ENCODE measurements at regions of chr1 and their contacts with region 1.

Region 1: DNA sequence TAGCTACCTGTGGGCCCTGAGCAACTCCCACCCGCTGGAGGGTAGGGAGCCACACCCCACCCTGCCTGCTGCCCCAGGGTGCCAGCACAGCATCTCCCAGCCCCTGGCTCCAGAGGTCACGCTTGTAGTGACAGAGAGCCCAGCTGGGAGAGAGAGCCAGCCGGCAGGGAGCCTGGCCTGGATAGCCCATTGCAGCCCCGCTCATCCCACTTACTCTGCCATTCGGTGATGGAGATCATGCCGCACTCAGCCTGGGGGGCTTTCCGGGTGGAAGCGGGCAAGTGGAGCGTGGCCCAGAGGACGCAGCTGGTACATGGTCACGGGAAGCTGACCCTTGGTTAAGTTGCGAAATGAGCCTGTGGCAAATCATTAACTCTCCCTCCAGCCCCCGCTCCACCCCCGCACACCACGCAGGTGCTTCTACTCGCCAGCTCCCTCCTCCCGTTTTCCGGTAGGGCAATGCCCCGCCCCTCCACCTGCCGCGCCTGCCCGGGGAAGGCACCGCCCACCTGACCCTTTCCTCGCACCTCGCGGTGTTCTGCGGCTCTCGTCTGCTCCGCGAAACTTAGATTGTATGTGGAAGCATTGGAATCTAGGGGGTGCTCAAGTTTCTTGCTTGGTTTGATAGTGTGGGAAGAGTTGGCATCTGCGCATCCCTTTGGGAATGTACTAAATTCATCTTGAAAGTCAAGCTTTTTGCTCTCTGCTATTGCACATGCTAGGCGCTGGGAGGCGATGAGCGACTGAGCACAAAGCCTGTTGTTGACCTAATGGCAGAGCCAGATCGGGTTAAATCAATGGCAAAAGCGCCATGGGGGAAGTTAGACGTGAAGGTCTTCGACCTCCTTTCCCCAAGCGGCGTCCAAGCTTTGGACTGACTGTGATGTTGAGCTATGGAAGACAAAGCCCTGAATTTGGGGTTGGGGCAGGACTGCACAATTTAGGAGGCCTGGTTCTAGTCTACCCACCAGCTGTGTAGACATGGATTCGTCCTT is at the start of gene GOLT1A:
- DNase-seq: peak; percentile 78 to 91
- ATAC-seq: peak; percentile 88 to 92
- H3K4me3 ChIP-seq: peak within 1 kb of the TSS; percentile 54
- H3K27ac ChIP-seq: peak within 1 kb of the TSS; percentile 73 to 88
- H3K4me1 ChIP-seq: peaks cover 6% of the 10 kb centered on the region; the same call in 2 of the 3 replicates
- CTCF ChIP-seq: peak; percentile 84
- EP300 ChIP-seq: no peak
- POLR2A ChIP-seq: no peak
- RAD21 ChIP-seq: peak; percentile 85 to 86
- polyA plus RNA-seq, gene GOLT1A: 6.4 and 6.8 TPM in 2 replicates

Region 2: GRCh38 chr1:204051258-204051657 is 162.7 kb before region 1 on chr1:
- CTCF ChIA-PET with region 1: no interaction called
- POLR2A ChIA-PET with region 1: no interaction called
- DNase-seq: no peak
- ATAC-seq: no peak
- H3K4me3 ChIP-seq: no peak overlapping the region
- H3K27ac ChIP-seq: no peak overlapping the region
- H3K4me1 ChIP-seq: no peaks in the 10 kb centered on the region
- CTCF ChIP-seq: no peak
- EP300 ChIP-seq: no peak
- POLR2A ChIP-seq: no peak
- RAD21 ChIP-seq: no peak

Region 3: GRCh38 chr1:204080163-204080903 is 133.6 kb before region 1 on chr1:
- CTCF ChIA-PET with region 1: no interaction called
- POLR2A ChIA-PET with region 1: no interaction called
- DNase-seq: peak; percentile 85 to 95
- ATAC-seq: peak; percentile 90 to 91
- H3K4me3 ChIP-seq: no peak overlapping the region
- H3K27ac ChIP-seq: peak overlapping the region; percentile 71 to 86
- H3K4me1 ChIP-seq: peaks cover 55% of the 10 kb centered on the region
- CTCF ChIP-seq: no peak
- EP300 ChIP-seq: no peak
- POLR2A ChIP-seq: no peak
- RAD21 ChIP-seq: no peak

Region 4: DNA sequence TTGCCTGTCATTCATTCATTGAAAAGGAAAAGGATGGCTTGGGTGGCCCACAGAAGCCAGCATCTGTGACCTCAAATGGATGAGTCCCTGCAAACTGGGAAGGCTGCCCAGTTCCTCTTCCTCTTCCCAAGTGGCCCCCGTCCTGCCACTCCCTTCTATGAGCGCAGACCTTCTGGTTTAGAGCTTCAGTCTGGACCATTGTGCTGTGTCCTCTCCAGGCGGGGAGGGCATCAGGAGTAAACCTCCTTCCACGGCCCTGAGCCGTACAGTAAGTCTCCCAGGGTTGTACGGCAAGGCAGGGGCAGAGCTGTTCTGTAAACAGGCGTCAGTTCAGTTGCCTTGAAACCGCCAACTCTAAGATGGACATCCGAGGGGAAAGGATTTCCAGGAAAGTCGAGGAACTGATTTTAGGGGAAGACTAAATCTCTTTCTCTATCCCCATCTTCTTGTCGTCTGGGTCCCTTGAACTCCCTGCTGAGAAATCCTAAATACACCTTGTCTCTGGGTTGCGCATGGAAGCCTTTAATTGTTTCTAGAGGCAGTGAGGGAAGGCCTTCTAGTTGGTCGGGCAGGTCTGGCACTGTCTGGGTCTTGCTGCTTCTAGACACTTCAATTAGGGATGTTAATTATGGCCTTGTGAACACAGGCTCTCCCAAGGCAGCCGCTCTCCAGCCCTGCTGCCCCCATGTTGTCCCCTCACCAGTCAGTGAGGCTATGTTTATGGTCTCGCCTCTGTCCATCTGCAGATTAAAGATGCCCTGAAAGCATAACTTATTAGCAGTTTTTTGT is 118.9 kb before region 1 on chr1:
- CTCF ChIA-PET with region 1: no interaction called
- POLR2A ChIA-PET with region 1: no interaction called
- DNase-seq: no peak
- ATAC-seq: peak in 1 of 2 experiments; percentile 33; a peak in 1 of 6 replicates
- H3K4me3 ChIP-seq: no peak overlapping the region
- H3K27ac ChIP-seq: 0 out of 6 replicates have a peak overlapping the region, but pooled peaks of 1 of the 2 experiments have one; percentile 80
- H3K4me1 ChIP-seq: peaks cover 27% of the 10 kb centered on the region
- CTCF ChIP-seq: no peak
- EP300 ChIP-seq: no peak
- POLR2A ChIP-seq: no peak
- RAD21 ChIP-seq: no peak

Region 5: DNA sequence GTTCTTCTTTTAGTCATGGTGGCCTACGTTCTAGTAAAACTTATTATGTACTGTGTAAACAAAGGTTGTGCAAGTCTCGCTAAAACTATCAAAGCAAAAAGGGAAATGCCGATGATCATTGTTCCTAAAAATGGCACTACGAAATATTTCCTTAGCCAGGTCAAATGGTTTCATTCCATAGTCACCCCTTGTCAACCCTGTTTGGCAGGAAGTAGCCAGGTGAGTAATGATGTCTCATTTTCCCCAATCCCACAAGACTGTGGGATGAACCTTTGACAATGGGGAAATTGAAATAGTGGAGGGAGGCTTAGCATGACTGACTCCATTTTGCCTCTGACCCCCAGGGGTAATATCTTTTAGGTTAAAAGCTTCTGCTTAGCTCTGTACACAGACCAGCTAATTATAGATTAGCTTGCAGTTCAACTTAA is 42.2 kb before region 1 on chr1:
- CTCF ChIA-PET with region 1: interaction called, 26 read pairs
- POLR2A ChIA-PET with region 1: no interaction called
- DNase-seq: peak; percentile 31 to 49
- ATAC-seq: peak in 1 of 2 experiments; percentile 49; a peak in 3 of 6 replicates
- H3K4me3 ChIP-seq: no peak overlapping the region
- H3K27ac ChIP-seq: no peak overlapping the region; a peak in 1 of 6 replicates
- H3K4me1 ChIP-seq: peaks cover 5% of the 10 kb centered on the region; the same call in 2 of the 3 replicates
- CTCF ChIP-seq: no peak
- EP300 ChIP-seq: no peak; a peak in 1 of 5 replicates
- POLR2A ChIP-seq: no peak
- RAD21 ChIP-seq: no peak

Region 6: DNA sequence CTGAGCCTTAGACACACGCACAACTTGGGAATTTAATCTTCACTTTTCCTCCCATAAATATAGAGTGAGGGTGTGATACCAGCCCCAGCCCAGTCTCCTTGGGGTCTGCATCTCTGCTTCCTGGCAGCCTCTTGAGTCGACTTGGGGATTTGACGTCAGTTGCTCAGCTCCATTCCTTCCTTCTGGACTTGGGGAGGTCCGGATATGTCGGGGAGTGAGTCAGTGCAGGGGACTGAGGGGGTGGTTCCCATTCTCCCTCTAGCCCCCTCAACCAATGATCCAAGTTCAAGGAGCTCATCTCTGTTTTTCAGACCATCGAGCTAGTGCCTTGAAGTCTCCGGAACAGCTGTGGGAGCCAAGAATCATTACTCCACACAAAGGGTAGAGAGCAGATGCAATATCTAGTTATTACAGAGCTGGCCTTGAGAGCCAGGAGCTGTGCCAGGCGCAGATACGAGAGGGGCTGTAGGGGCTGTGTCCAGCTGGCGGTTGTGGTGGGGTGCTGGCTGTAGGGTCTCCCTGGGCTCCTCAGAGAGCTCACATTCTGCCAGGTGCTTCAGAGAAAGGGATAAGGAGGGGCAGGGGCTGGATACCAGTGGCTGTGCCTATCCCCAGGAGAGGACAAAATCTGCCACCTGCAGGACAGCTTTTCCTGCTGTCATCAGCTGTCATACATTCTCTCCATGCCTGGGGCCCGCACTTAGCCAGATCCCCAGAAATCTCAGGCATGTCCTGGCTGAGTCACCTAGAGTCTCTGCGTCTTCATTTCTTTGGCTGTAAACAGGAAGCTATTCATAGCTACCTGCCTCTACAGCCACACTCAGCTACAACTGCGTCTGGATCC is 15.6 kb before region 1 on chr1:
- CTCF ChIA-PET with region 1: interaction called, 18 read pairs
- POLR2A ChIA-PET with region 1: no interaction called
- DNase-seq: peak; percentile 44 to 49
- ATAC-seq: peak; percentile 57 to 59
- H3K4me3 ChIP-seq: no peak overlapping the region
- H3K27ac ChIP-seq: 0 out of 6 replicates have a peak overlapping the region, but pooled peaks of 1 of the 2 experiments have one; percentile 18
- H3K4me1 ChIP-seq: peaks cover 5% of the 10 kb centered on the region; the same call in 2 of the 3 replicates
- CTCF ChIP-seq: peak; percentile 12; the same call in 1 of the 3 replicates
- EP300 ChIP-seq: no peak
- POLR2A ChIP-seq: no peak
- RAD21 ChIP-seq: peak; percentile 16 to 34; a peak in 3 of 5 replicates

Region 7: DNA sequence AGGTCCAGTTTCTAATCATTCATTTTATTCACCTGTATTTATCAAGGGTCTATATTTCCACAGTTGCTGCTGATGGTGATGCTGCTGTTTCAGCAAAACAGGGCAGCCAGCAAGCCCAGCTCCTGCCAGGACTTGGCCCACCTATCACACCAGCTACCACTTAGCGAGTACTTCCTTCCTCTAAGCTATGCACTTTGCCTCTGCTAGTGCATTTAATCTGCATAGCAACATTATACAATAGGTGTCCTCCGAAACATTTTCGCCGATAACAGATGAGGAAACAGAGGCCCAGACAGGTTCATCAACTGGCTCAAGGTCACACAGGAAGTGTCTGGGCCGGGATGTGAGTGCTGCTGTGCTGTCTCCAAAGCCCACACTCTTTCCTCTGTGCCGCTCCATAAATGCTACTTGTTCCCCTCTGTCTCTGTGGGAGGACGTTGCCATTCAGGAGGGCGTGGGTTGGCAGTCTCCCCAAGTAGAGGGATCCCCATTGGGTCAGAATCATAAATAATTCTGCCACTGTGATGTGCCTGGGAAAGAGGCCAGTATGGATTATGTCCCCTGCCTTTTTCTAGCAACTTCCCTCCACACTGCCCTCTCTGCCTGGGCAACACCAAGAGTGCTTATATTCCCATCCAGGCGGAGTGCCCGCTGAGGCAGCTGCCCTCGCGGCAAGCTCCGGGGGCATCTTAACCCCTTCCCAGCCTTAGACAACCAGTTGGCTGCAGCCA is 155.2 kb after region 1 on chr1:
- CTCF ChIA-PET with region 1: interaction called, 133 read pairs
- POLR2A ChIA-PET with region 1: no interaction called
- DNase-seq: no peak
- ATAC-seq: no peak
- H3K4me3 ChIP-seq: no peak overlapping the region
- H3K27ac ChIP-seq: no peak overlapping the region
- H3K4me1 ChIP-seq: peaks cover 3% of the 10 kb centered on the region; the same call in 2 of the 3 replicates
- CTCF ChIP-seq: no peak
- EP300 ChIP-seq: no peak
- POLR2A ChIP-seq: no peak
- RAD21 ChIP-seq: no peak